WTC11 (cell line): ENCODE measurements at regions of chr1 and their contacts with region 1.

Region 1: DNA sequence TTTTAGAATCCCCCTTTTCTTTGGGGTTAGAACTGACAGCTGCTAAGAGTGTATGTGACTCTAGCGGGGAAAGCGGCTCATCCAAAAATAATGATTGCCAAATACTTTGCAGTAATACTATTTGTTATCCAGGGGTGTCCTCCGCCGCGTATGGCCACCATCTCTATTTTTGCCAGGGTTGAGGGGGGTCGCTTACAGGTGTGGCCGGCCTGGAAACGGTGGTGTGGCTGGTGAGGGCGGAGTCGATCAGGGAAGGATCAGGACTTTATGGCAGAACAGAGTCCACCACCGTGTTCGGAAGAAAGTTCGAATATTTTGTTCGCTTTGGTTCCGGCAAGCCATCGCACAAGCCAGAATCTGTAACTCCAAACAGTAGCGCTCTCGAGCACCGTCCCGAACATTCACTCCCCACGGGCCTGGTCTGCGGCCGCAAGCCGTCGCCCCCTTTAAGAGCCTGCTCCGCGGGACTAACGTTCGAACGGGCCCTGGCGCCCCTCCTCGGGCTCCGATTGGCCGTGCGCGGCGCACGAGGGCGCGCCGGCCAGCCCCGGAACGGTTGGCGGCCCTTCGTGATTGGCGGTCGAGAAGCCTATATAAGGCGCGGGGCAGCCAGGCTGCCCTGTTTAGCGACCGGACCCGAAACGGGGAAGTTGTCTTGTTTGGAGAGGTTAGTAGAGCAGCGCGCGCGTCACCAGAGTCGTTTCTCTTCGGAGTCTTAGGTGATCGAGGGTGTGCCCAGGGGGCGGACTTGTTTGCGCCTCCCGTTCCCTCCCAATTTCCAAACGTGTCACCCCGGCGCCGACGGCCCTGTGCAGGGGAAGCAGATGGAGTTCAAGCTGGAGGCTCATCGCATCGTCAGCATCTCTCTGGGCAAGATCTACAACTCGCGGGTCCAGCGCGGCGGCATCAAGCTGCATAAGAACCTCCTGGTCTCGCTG is at the start of gene IER5:
- DNase-seq: peak; percentile 91
- ATAC-seq: peak; percentile 87
- H3K4me3 Mint-ChIP-seq: peak within 1 kb of the TSS; percentile 94
- H3K27ac Mint-ChIP-seq: peak within 1 kb of the TSS; percentile 92
- H3K4me1 Mint-ChIP-seq: peaks cover 37% of the 10 kb centered on the region
- H3K27me3 Mint-ChIP-seq: peaks cover 35% of the 10 kb centered on the region
- CTCF ChIP-seq: no peak
- total RNA-seq, gene IER5: 14.2 to 18.2 TPM (median 14.3 TPM) in 3 replicates

Region 2: DNA sequence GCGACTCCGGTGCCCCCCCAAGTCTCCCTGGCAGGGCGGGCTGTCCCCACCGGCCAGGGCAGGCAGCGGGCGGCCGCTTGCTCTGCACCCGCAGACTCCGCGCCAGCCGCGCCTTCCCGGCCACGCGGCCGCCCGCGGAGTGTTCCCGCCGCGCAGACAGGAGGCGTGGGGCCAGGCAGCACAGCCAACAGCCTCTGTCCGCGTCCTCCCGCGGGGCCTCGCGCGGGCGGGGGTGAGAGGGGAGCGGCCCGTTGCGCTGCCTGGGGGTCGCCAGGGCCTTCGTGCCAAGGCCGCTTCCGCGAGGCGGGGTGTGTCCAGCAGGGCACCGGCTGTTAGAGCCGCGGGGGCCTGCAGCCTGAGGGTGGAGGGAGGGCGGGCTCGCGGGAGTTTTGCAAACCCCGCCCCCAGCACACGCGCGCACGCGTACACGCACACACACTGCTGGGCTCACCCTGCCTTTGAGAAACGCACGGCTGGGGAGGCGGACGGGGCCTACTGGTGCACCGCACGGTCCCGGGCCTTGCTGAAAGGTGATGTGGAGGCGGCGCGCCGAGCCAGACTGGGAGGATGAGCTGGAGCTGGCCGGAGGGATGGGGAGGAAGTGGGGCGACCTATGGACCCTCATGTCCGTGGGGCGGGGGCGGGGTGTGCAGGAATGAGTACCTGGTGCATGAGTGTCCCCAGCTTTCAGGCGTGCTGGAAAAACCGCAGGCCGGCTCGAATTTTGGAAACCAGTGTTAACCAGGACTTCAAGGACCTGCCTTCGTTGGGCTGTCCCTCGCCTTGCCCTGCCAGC is 134.1 kb before region 1 on chr1:
- CTCF ChIA-PET with region 1: no interaction called
- POLR2A ChIA-PET with region 1: no interaction called
- DNase-seq: peak; percentile 31
- ATAC-seq: peak; percentile 18
- H3K4me3 Mint-ChIP-seq: no peak overlapping the region; the same call in 1 of the 2 replicates
- H3K27ac Mint-ChIP-seq: peak overlapping the region; percentile 43; the same call in 1 of the 2 replicates
- H3K4me1 Mint-ChIP-seq: peaks cover 17% of the 10 kb centered on the region
- H3K27me3 Mint-ChIP-seq: no peaks in the 10 kb centered on the region
- CTCF ChIP-seq: no peak

Region 3: DNA sequence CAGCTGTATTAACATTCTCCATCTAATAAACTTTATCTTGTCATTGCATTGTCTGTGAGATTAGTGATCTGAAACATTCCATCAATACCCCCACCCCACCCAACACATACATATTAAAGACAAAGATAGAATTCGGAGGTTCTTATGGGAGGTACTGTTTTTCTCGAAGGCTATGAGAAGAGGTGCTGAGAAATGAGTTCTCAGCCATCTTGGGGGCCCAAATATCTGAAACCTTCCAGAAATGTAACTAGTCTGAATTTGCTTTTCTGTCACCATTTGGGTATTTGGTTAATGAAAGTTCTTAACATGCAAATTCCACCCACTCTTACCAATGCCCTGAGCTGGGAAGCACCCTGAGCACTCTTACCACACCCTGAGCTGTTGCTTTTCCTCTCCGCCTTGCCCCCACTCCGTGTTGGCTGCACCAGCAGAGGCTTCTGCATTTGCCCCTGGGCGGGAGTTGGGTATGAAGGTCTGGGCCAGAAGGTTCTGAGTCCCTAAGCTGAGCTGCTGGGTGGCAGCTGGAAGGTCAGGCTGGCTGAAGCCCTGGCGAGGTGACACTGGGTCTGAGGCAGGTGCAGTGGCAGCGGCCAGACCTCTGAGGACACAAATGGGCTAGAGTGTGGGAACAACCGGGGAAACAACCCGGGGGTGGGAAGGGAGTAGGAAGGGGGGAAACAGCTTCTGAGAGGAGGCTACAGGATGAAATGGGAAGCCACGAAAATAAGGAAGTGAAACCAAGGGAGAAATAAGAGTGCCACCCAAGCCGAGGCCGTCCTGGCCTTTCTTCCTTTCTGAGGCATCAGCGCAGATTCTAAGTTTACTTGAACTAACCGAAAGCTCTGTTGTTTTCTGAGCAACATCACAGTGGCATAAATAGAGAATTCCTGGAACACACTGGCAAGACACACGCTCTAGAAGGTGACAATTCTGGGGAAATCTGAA is 26.2 kb before region 1 on chr1:
- CTCF ChIA-PET with region 1: interaction called, 3 read pairs
- POLR2A ChIA-PET with region 1: interaction called, 11 read pairs
- DNase-seq: no peak
- ATAC-seq: no peak
- H3K4me3 Mint-ChIP-seq: no peak overlapping the region
- H3K27ac Mint-ChIP-seq: no peak overlapping the region
- H3K4me1 Mint-ChIP-seq: peaks cover 37% of the 10 kb centered on the region
- H3K27me3 Mint-ChIP-seq: no peaks in the 10 kb centered on the region
- CTCF ChIP-seq: no peak

Region 4: GRCh38 chr1:181099152-181100014 is 11.0 kb after region 1 on chr1:
- CTCF ChIA-PET with region 1: interaction called, 10 read pairs
- POLR2A ChIA-PET with region 1: interaction called, 12 read pairs
- DNase-seq: no peak
- ATAC-seq: no peak
- H3K4me3 Mint-ChIP-seq: peak overlapping the region; percentile 19
- H3K27ac Mint-ChIP-seq: peak overlapping the region; percentile 2; the same call in 1 of the 2 replicates
- H3K4me1 Mint-ChIP-seq: peaks cover 97% of the 10 kb centered on the region
- H3K27me3 Mint-ChIP-seq: peaks cover 66% of the 10 kb centered on the region
- CTCF ChIP-seq: no peak

Region 5: GRCh38 chr1:181105134-181106021 is 17.0 kb after region 1 on chr1:
- CTCF ChIA-PET with region 1: interaction called, 10 read pairs
- POLR2A ChIA-PET with region 1: interaction called, 12 read pairs
- DNase-seq: peak; percentile 89
- ATAC-seq: peak; percentile 63
- H3K4me3 Mint-ChIP-seq: peak overlapping the region; percentile 85
- H3K27ac Mint-ChIP-seq: no peak overlapping the region
- H3K4me1 Mint-ChIP-seq: peaks cover 83% of the 10 kb centered on the region
- H3K27me3 Mint-ChIP-seq: peaks cover 73% of the 10 kb centered on the region
- CTCF ChIP-seq: no peak

Region 6: GRCh38 chr1:181134543-181135362 is 46.4 kb after region 1 on chr1:
- CTCF ChIA-PET with region 1: interaction called, 43 read pairs
- POLR2A ChIA-PET with region 1: interaction called, 6 read pairs
- DNase-seq: no peak
- ATAC-seq: no peak
- H3K4me3 Mint-ChIP-seq: no peak overlapping the region
- H3K27ac Mint-ChIP-seq: peak overlapping the region; percentile 77
- H3K4me1 Mint-ChIP-seq: peaks cover 57% of the 10 kb centered on the region
- H3K27me3 Mint-ChIP-seq: peaks cover 8% of the 10 kb centered on the region; the same call in 1 of the 2 replicates
- CTCF ChIP-seq: no peak

Region 7: DNA sequence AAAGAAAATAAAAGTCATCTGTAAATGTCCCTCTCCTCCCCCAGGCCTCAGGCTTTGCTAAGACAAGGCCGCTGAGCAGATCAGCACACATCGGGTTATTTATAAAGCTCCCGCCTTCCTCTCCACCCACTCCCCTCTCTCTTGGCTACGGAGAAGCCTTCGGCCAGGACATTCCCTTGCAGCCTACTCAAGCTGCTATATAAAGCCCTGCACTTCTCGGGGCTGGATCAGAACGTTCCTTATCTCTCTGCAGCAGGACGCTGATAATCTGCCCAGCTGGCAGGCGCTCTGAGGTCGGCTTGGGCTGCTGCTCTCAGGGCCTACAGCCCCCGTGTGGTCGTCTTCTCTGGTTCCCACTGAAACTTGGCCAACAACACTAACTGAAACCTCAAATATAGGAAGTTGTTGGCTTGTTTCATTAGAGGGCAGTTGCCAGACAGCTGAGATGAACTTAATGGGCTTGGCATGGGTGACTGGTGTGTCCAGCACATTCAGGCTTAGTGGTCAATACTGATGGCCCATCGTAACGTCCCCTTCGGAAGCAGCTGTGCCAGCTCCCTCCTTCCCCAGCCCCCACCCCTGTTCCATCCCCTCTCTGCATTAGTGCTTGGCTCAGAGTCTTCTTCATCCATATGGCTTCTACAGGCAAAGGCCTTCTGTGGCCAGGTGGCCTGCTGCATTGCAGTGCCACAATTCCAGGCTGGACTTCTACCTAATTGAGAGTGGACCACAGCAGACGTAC is 64.7 kb after region 1 on chr1:
- CTCF ChIA-PET with region 1: interaction called, 13 read pairs
- POLR2A ChIA-PET with region 1: no interaction called
- DNase-seq: peak; percentile 34
- ATAC-seq: peak; percentile 88
- H3K4me3 Mint-ChIP-seq: no peak overlapping the region
- H3K27ac Mint-ChIP-seq: 0 out of 2 replicates have a peak overlapping the region, but pooled peaks have one; percentile 44
- H3K4me1 Mint-ChIP-seq: peaks cover 20% of the 10 kb centered on the region
- H3K27me3 Mint-ChIP-seq: no peaks in the 10 kb centered on the region; the same call in 1 of the 2 replicates
- CTCF ChIP-seq: no peak

Region 8: DNA sequence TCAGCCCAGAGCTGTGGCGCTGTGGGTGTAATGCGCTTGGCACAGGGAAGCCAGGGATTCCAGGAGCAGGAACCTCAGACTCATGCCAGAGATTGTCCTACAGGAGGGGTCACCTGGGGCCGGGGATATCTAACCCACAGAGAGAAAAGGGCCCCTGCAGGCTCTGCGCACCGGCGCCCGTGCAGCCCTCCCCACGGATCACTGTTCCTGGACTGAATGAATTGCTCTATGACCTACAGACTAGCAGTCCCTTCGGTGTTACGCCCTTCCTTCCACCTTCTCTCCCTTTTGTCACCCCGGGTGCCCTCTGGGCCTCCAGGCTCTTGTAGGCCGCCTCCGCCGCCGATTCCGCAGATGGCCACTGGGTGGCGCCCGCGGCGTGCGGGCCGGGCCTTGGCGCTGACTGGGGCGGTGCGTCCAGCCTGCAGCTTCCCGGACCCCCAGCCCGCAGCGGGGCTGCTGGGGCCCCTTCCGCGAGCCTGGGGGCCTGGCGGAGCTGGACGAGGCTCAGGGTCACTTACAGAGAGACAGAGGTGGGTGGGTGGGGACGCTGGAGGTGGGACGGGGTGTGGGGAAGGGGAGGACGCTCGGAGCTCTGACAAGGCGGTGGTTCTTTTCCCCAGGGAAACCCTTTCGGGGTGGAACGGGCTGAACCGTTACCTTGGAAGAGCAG is 101.5 kb after region 1 on chr1:
- CTCF ChIA-PET with region 1: no interaction called
- POLR2A ChIA-PET with region 1: no interaction called
- DNase-seq: peak; percentile 87
- ATAC-seq: peak; percentile 91
- H3K4me3 Mint-ChIP-seq: peak overlapping the region; percentile 58
- H3K27ac Mint-ChIP-seq: no peak overlapping the region
- H3K4me1 Mint-ChIP-seq: peaks cover 5% of the 10 kb centered on the region; the same call in 1 of the 2 replicates
- H3K27me3 Mint-ChIP-seq: peaks cover 24% of the 10 kb centered on the region
- CTCF ChIP-seq: peak; percentile 97

Region 9: GRCh38 chr1:181239086-181239485 is 150.7 kb after region 1 on chr1:
- CTCF ChIA-PET with region 1: no interaction called
- POLR2A ChIA-PET with region 1: no interaction called
- DNase-seq: no peak
- ATAC-seq: no peak
- H3K4me3 Mint-ChIP-seq: no peak overlapping the region
- H3K27ac Mint-ChIP-seq: no peak overlapping the region
- H3K4me1 Mint-ChIP-seq: no peaks in the 10 kb centered on the region
- H3K27me3 Mint-ChIP-seq: no peaks in the 10 kb centered on the region
- CTCF ChIP-seq: no peak